ENCODE measurements at regions of chr7 and their contacts with region 1.

Region 1: DNA sequence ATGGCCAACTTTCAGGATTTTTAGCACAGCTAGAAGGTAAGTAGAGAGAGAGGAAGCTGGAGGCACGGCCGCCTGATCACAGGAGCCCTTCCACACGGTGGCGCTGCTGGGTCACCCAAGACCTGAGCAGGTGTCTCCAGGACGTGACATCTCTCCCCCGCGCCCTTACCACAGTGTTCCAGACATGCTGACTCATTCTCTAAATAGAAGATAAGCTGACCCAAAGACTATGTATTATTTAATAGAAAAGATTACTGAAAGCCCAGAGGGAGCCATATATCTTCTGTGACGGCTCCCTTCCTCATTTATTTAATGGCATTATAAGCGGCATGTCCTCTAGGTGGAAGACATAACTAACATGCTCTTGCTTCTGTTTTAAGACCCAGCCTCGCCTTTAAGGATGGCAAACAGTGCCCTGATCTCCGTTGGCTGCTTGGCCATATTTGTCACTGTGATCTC is 26.0 kb upstream of the MALSU1 start:
- DNase-seq: peak; percentile 93
- H3K4me3 Mint-ChIP-seq: peak overlapping the region; percentile 61
- H3K27ac Mint-ChIP-seq: peak overlapping the region; percentile 20
- H3K4me1 Mint-ChIP-seq: peaks cover 9% of the 10 kb centered on the region
- H3K27me3 Mint-ChIP-seq: peaks cover 3% of the 10 kb centered on the region

Region 2: DNA sequence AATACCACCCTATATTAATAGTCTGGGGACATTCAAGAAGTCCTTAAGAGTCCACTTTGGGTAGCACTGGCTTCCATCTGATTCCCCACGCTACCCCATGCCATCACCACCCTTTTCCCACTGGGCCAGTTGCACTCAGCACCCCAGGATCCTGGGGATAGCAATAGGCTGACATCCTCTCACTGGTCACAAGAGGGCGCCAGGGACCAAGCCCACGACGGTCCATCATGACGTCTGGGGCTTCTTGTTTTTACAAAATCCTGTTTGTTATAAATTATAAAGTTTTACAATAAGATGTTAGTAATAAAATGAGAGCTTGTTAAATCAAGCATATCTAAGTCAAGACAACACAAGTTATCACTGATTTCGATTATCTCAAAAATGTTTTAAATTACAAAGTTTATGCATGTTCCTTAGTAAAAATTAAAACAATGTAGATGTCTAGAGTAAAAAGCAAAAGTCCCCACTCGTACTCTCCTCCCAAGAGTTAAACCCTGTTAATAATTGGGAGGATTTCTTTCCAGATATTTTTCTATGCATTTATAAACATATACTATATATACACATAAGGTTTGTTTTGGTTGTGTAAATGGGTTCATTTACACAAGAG is 11.2 kb before region 1 on chr7:
- CTCF ChIA-PET with region 1: interaction called, 129 read pairs
- POLR2A ChIA-PET with region 1: no interaction called
- intact Hi-C with region 1: loop called (anchors 1 kb)
- DNase-seq: peak; percentile 73
- H3K4me3 Mint-ChIP-seq: no peak overlapping the region
- H3K27ac Mint-ChIP-seq: no peak overlapping the region
- H3K4me1 Mint-ChIP-seq: peaks cover 10% of the 10 kb centered on the region
- H3K27me3 Mint-ChIP-seq: peaks cover 7% of the 10 kb centered on the region

Region 3: DNA sequence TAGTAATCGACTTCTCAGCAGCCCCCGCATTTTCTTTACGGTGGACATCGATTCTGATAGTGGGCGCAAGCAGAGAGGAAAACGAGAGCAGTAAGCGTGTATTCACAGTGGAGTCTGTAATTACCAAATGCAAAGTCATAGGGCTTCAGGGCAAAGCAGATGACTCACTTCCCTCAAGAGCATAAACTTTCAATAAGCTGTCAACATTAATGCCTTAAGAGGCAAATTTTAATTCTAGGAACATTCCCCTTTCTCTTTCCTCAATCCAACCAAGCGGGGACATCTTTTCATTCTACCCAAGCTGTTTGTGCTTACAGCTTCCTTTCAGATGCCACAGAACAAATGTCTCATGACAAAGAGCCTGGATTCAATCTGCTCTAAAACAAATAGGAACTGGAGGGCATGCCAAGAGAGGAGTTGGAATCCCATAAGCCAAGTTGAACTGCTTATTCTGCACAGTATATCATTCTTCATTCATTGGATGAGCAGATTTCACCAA is 74.6 kb after region 1 on chr7:
- CTCF ChIA-PET with region 1: interaction called, 13 read pairs
- POLR2A ChIA-PET with region 1: no interaction called
- intact Hi-C with region 1: loop called (anchors 2 kb)
- DNase-seq: no peak
- H3K4me3 Mint-ChIP-seq: no peak overlapping the region
- H3K27ac Mint-ChIP-seq: no peak overlapping the region
- H3K4me1 Mint-ChIP-seq: peaks cover 27% of the 10 kb centered on the region
- H3K27me3 Mint-ChIP-seq: peaks cover 3% of the 10 kb centered on the region

Region 4: DNA sequence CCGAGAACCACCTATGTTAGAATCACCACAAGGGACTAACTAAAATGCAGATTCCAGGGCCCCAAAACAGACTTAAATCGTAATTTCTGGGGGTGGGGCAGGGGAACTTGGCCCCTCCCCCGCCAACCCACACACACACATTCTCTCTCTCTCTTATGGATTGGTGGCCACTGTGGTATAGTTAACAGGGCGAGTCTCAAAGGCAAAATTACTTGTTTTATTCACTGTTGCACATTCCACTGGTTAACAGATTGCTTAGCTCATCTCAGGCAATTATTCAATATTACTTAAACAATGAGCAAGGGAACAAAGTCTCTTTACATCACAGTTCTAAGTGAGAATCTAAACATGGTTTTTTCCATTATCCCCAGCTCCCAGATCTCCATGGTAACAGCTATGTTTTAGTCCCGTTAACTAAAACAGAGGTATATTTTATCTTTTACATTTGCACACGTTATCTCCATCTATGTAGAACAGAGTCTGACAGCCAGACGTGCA is 158.6 kb after region 1 on chr7:
- CTCF ChIA-PET with region 1: interaction called, 21 read pairs
- POLR2A ChIA-PET with region 1: no interaction called
- intact Hi-C with region 1: loop called (anchors 1 kb)
- DNase-seq: no peak
- H3K4me3 Mint-ChIP-seq: no peak overlapping the region
- H3K27ac Mint-ChIP-seq: no peak overlapping the region
- H3K4me1 Mint-ChIP-seq: no peaks in the 10 kb centered on the region
- H3K27me3 Mint-ChIP-seq: peaks cover 25% of the 10 kb centered on the region

Region 5: GRCh38 chr7:23490357-23491135 is 217.4 kb after region 1 on chr7:
- CTCF ChIA-PET with region 1: interaction called, 11 read pairs
- POLR2A ChIA-PET with region 1: no interaction called
- intact Hi-C with region 1: no loop called
- DNase-seq: peak; percentile 65
- H3K4me3 Mint-ChIP-seq: peak overlapping the region; percentile 80
- H3K27ac Mint-ChIP-seq: peak overlapping the region; percentile 80
- H3K4me1 Mint-ChIP-seq: peaks cover 3% of the 10 kb centered on the region
- H3K27me3 Mint-ChIP-seq: no peaks in the 10 kb centered on the region

Region 6: DNA sequence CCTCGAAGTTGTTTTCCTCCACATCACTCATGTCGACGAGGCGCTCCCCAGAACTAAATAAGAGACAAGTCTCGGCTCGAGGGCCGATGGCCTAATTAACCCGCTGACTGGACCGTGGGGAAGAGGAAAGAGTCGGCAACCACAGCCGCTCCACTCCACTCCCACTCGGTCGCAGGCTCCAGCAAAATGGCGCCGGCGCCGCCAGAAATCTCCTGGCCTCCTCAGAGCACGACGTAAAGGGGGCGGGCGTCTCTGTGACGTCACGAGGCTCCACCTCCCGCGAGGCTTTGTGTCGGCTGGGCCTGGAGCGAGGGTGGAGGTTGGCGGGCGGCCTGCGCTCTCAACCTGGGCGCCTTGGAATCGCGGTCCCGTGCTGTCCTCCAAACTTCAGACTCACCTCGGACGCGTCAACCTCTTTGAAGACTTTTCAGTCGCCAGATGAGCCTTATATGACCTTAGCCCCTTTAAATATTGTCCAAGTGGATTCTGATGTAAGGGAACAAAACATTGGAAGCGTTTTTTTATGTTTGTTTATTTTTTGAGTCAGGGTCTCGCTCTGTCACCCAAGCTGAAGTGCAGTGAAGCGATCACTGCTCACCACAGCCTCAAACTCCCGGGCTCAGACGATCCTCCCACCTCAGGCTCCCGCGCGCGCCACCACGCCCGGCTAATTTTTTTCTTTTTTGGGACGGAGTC is 258.8 kb after region 1 on chr7 and contains the start of gene TRA2A:
- CTCF ChIA-PET with region 1: interaction called, 3 read pairs
- POLR2A ChIA-PET with region 1: no interaction called
- intact Hi-C with region 1: loop called (anchors 2 kb)
- DNase-seq: peak; percentile 98
- H3K4me3 Mint-ChIP-seq: peak within 1 kb of the TSS; percentile 100
- H3K27ac Mint-ChIP-seq: peak within 1 kb of the TSS; percentile 100
- H3K4me1 Mint-ChIP-seq: peaks cover 38% of the 10 kb centered on the region
- H3K27me3 Mint-ChIP-seq: no peaks in the 10 kb centered on the region
- total RNA-seq, gene TRA2A: 75.4 to 77.8 TPM

Region 7: GRCh38 chr7:23685731-23686130 is 412.6 kb after region 1 on chr7:
- CTCF ChIA-PET with region 1: no interaction called
- POLR2A ChIA-PET with region 1: no interaction called
- intact Hi-C with region 1: no loop called
- DNase-seq: no peak
- H3K4me3 Mint-ChIP-seq: no peak overlapping the region
- H3K27ac Mint-ChIP-seq: no peak overlapping the region
- H3K4me1 Mint-ChIP-seq: peaks cover 5% of the 10 kb centered on the region
- H3K27me3 Mint-ChIP-seq: no peaks in the 10 kb centered on the region

Region 8: GRCh38 chr7:23712368-23713284 is 439.5 kb after region 1 on chr7:
- CTCF ChIA-PET with region 1: interaction called, 7 read pairs
- POLR2A ChIA-PET with region 1: no interaction called
- intact Hi-C with region 1: loop called (anchors 5 kb)
- DNase-seq: no peak
- H3K4me3 Mint-ChIP-seq: no peak overlapping the region
- H3K27ac Mint-ChIP-seq: peak overlapping the region; percentile 5
- H3K4me1 Mint-ChIP-seq: no peaks in the 10 kb centered on the region
- H3K27me3 Mint-ChIP-seq: peaks cover 2% of the 10 kb centered on the region

Measured in activated CD4-positive, alpha-beta memory T cell treated with anti-CD3 and anti-CD28 coated beads for 36 hours (primary cell).